Tibial artery (tissue), 4 donors: ENCODE measurements at regions of chr1 and their contacts with region 1.

Region 1: DNA sequence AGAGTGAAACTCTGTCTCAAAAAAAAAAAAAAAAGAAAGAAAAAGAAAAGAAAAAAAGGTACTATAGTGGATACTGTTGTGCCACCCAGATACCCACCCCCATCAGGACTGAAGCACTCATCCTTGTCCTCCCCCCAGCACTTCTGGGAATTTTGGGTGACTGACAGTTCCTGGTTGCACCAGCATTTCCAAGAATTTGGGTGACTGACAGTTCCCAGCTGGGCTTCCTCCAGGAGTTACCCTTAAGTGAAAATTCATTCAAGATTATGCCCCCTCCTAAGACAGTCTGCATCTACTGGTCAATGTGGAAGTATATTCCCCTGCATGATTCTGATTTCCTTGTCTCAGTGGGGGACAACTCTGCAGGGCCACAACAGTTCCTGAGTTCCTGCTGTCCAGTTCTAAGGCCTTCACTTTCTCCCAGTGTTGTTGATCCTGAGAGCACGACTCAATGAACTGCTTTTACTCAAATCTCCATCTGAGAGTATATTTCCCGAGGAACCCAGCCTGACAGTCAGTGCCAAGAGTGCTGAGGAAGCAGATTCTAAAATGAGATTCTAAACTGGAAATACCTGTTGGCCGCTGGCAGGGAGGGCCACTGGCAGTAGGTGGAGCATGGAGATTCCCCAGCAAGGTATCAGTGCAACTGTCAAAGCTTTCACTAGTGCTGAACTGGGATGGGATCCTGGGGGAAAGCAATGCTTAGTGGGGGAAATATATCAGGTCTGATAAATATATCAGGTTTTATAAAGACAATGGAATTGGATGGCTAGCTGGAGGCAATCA is 18.5 kb downstream of the RIIAD1 start:
- DNase-seq: no peak
- H3K4me3 ChIP-seq: no peak overlapping the region
- H3K27ac ChIP-seq: no peak overlapping the region
- H3K4me1 ChIP-seq: peaks cover 0 to 5% (median 0%) of the 10 kb centered on the region in 4 donors
- H3K27me3 ChIP-seq: no peaks in the 10 kb centered on the region
- CTCF ChIP-seq: no peak

Region 2: GRCh38 chr1:151443846-151444782 is 295.7 kb before region 1 on chr1:
- intact Hi-C with region 1: loop called (anchors 10 kb)
- DNase-seq: peak in 1 of 2 donors; percentile 54
- H3K4me3 ChIP-seq: no peak overlapping the region
- H3K27ac ChIP-seq: peak overlapping the region in 1 of 2 donors; percentile 4
- H3K4me1 ChIP-seq: peaks cover 0 to 55% (median 28%) of the 10 kb centered on the region in 4 donors
- H3K27me3 ChIP-seq: no peaks in the 10 kb centered on the region
- CTCF ChIP-seq: peak; percentile 64 to 75

Region 3: DNA sequence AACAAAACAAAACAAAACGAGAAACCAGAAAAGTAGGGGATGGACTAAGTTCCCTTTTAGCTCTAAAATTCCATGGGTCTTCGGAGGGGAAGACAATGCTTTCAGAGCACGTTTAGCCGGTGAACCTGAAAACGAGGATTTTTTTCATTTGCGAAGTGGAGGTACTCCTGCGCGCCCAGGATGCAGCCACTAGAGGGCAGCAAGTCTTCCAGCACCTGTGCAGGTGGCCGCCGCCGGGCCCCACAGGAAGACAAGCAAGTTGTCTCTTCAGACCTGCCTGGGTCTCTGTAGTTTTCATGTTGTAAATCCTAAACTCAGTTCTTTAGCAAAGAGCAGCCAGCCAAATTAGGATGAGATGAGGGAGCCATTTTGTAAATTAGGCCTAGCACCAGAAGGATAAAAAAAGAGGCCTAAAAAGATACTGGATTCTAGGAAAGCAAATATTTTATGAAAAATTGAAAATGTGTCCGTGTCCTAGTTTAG is 145.6 kb before region 1 on chr1:
- intact Hi-C with region 1: loop called (anchors 5 kb)
- DNase-seq: peak; percentile 59 to 83
- H3K4me3 ChIP-seq: no peak overlapping the region
- H3K27ac ChIP-seq: no peak overlapping the region
- H3K4me1 ChIP-seq: peaks cover 0 to 7% (median 0%) of the 10 kb centered on the region in 4 donors
- H3K27me3 ChIP-seq: no peaks in the 10 kb centered on the region
- CTCF ChIP-seq: peak; percentile 82 to 84

Region 4: DNA sequence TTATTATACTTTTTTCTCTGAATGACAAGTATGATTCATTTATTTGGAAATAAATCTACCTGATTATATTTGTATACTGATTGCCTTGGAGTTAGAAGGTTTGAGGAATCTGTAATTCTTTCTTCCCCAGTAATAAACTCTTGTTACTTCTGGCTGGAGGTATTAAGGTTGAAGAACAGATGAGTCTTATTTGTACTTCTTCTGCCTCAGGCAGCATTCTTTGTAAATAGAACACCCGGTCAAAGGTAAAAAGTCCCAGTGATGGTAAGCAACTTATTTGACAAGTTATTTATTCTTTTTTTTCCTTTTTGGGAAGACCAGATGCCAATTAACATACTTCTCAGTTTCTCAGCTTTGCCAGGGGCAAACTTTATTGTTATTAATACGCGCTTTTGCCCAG is 115.0 kb before region 1 on chr1:
- intact Hi-C with region 1: no loop called
- DNase-seq: no peak
- H3K4me3 ChIP-seq: no peak overlapping the region
- H3K27ac ChIP-seq: no peak overlapping the region
- H3K4me1 ChIP-seq: peaks cover 0 to 19% (median 4%) of the 10 kb centered on the region in 4 donors
- H3K27me3 ChIP-seq: no peaks in the 10 kb centered on the region
- CTCF ChIP-seq: no peak